ENCODE measurements at regions of chr12 and their contacts with region 1.

Region 1: DNA sequence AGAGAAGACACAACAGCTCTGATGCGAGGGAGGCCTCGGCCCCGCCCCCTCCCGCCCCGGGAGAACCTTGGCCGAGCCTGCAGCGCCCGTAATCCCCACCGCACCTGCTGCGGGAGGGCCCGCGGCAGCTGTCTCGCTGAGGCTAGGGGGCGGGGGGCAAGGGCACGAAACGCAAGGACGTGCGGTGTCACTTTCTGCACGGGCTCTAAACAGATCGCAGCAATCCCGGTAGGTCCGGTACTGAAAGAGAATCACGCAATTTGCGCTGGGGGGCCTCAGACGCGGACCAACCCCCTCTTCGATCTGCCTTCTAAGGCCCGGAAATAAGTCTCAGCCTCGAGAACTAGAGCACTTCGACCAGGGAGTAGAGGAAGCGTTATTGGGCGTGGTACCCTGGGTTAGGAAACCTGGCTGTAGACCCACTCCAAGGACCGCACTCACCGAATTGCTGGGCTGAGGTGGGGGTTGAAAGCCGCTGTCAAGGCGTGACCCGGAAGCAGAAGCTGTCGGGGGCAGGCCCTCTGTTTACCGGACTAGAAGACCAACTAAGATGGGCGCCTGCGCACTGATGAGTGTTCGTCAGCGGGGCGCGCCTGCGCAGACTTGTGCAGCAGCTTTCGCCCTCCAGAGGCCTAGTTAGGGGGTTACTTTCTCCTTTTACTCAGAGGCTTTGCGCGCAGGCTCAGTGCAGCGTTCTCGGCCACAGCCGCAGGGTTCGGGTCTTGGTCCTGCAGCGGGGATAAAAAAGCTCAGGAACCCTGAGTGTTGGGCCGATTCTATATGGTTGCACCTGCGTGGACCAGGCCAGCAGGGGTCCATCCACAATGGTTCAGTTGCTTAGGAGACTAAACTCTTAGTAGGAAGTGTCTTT is at the start of gene ASB8:
- DNase-seq: peak; percentile 94
- H3K4me3 ChIP-seq: peak within 1 kb of the TSS; percentile 63 to 92 (median 83)
- H3K27ac ChIP-seq: peak within 1 kb of the TSS; percentile 41
- H3K4me1 ChIP-seq: peaks cover 6% of the 10 kb centered on the region
- H3K27me3 ChIP-seq: no peaks in the 10 kb centered on the region
- CTCF ChIP-seq: peak; percentile 34 to 51
- total RNA-seq, gene ASB8: 20.4 to 20.7 TPM

Region 2: DNA sequence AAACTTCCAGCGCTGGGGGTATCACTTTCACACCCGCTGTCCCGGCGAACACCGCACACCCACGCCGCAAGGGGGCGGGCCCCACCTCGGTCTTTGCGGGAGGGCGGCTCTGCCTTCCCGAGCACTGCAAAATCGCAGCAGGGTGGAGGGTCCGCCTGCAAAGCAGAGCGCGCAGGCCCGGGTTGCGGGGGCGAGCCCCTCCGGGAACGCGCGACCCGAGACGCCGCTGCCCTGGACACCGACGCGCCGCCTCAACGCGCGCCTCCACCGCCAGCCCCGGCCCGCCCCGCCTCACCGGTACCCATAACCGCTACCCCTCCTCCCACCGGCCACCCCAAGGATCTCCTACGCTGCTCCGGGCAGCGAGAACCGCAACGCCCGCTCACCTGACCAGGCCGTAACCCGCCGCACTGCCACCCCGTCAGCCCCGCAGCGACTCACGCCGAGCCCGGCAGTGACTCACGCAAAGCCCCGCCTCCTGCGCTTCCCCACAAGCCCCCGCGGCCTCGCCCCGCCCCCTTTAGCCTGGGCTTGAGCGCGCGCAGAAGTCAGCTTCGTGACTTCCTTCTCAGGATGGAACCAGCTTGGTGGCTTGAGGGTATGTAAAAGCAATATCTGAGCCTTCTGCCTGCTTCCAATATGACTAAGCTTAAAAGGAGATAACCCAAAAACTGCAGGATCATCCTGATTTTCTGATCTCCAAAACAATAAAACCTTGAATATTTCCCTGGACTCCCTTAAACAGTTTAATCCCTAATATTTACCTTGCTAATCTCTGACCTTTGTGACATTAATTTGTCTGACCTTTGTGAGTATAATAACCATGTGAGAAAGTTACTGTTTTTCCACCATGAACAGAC is 451.5 kb before region 1 on chr12 and contains the start of gene RPAP3:
- CTCF ChIA-PET with region 1: no interaction called
- dilution Hi-C with region 1: no loop called
- in situ Hi-C with region 1: loop called in 1 of 2 experiments (anchors 25 kb)
- intact Hi-C with region 1: no loop called
- DNase-seq: peak; percentile 90
- H3K4me3 ChIP-seq: peak within 1 kb of the TSS; percentile 53 to 92 (median 67)
- H3K27ac ChIP-seq: peak within 1 kb of the TSS; percentile 46
- H3K4me1 ChIP-seq: peaks cover 9% of the 10 kb centered on the region
- H3K27me3 ChIP-seq: no peaks in the 10 kb centered on the region
- CTCF ChIP-seq: peak; percentile 24 to 67
- total RNA-seq, gene RPAP3: 14.8 to 32.7 TPM

Region 3: GRCh38 chr12:47870175-47870781 is 287.0 kb before region 1 on chr12:
- CTCF ChIA-PET with region 1: no interaction called
- dilution Hi-C with region 1: no loop called
- in situ Hi-C with region 1: loop called in 1 of 2 experiments (anchors 25 kb)
- intact Hi-C with region 1: no loop called
- DNase-seq: no peak
- H3K4me3 ChIP-seq: no peak overlapping the region
- H3K27ac ChIP-seq: no peak overlapping the region
- H3K4me1 ChIP-seq: peaks cover 10% of the 10 kb centered on the region
- H3K27me3 ChIP-seq: no peaks in the 10 kb centered on the region
- CTCF ChIP-seq: peak; percentile 19 to 46

Region 4: DNA sequence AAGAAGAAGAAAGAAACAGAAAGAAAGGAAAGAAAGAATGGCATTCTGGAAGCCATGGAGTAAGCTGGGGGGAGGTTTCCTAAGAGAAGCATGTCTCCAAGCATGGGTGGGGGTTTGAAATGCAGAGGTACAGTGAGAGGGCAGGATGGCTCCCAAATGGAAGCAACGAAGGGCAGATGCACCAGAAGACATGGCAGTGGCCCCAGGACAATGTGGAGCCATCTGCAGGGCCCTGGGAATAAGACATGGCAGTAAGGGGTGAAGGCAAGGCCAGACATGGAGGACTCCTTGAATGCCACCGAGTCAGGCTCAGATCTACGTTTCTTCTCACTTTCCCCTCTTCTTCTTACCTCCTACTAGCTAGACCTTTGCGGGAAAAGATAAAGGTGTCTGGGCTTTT is 148.3 kb before region 1 on chr12:
- CTCF ChIA-PET with region 1: interaction called, 15 read pairs
- dilution Hi-C with region 1: no loop called
- in situ Hi-C with region 1: no loop called
- intact Hi-C with region 1: no loop called
- DNase-seq: no peak
- H3K4me3 ChIP-seq: no peak overlapping the region
- H3K27ac ChIP-seq: no peak overlapping the region
- H3K4me1 ChIP-seq: peaks cover 5% of the 10 kb centered on the region
- H3K27me3 ChIP-seq: peaks cover 7% of the 10 kb centered on the region
- CTCF ChIP-seq: no peak

Region 5: DNA sequence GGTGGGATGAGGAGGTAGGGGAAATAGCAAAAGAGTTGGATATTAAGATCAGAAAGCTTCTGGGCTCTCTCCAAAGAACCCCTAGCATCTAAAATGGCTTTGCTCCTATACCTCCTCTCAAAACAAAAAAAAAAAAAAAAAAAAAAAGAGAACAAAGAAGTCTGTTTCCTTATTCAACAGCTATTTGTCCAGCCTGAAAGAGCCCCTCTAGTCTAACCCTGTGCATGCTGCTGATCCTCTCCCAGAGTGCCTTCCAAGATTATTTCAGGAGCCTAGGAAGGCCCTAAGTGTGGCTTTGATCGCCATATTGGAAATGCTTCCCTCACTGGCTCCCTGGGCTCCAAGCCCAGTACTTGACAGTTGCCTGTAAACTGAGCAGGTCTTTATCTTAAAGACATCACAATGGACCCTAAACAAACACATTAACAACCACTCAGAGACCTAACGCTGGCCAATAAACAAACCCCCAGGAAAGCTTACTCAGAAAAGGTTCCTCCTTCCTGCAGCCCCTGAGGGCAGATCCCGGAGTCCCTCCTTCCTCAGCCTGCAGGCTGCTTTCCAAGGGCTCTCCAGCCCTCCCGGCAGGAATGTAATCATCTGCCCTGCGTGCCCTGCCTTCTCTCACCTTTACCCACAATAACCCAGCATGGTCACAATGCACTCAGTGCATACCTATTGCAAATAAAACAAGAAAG is 135.6 kb before region 1 on chr12:
- CTCF ChIA-PET with region 1: no interaction called
- dilution Hi-C with region 1: no loop called
- in situ Hi-C with region 1: no loop called
- intact Hi-C with region 1: no loop called
- DNase-seq: no peak
- H3K4me3 ChIP-seq: no peak overlapping the region
- H3K27ac ChIP-seq: no peak overlapping the region
- H3K4me1 ChIP-seq: peaks cover 5% of the 10 kb centered on the region
- H3K27me3 ChIP-seq: no peaks in the 10 kb centered on the region
- CTCF ChIP-seq: no peak

Region 6: GRCh38 chr12:48105862-48106680 is 51.2 kb before region 1 on chr12 and contains the start of gene SENP1:
- CTCF ChIA-PET with region 1: no interaction called
- dilution Hi-C with region 1: no loop called
- in situ Hi-C with region 1: no loop called
- intact Hi-C with region 1: loop called (anchors 2 kb)
- DNase-seq: peak; percentile 85
- H3K4me3 ChIP-seq: peak within 1 kb of the TSS; percentile 66 to 91 (median 86)
- H3K27ac ChIP-seq: peak within 1 kb of the TSS; percentile 94
- H3K4me1 ChIP-seq: peaks cover 25% of the 10 kb centered on the region
- H3K27me3 ChIP-seq: no peaks in the 10 kb centered on the region
- CTCF ChIP-seq: peak in 1 of 2 donors; percentile 28
- total RNA-seq, gene SENP1: 20.3 to 24.7 TPM

Region 7: DNA sequence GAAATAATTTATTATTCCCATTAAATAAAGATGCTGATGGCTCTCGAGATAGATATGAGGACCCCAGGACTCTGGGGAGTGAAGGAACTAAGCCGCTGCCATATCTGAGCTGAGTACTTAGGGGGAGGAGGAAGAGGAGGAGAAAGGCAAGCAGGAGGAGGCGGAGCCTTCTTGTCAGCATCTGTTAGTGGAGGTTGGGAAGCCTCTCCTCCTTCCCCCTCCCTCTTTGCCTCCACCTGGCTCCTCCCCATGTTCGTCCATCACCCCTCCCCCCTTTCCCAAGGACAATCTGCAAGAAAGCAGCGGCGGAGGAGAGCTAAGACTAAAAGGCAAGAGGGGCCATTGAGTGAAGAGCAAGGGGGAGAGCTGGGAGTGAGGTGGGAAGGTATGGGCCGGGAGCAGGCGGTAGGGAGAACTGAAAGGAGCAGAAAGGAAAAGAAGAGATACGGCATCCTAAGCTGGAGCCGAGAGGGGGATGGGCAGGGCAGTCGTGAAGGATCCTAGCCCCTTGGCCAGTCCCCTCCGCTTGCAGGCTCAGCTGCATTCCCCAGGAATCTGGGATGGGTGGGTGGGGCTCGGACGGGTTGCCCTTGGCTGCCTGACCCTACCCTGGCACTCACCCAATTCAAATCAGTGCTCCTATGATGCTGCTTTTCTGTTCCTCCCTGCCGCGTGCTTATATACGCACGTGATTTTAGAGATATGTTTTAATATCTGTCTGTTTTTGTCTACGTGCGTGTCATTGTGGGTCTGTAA is 38.0 kb before region 1 on chr12 and contains the start of gene PFKM:
- CTCF ChIA-PET with region 1: no interaction called
- dilution Hi-C with region 1: no loop called
- in situ Hi-C with region 1: no loop called
- intact Hi-C with region 1: loop called (anchors 5 kb)
- DNase-seq: peak; percentile 84
- H3K4me3 ChIP-seq: peak within 1 kb of the TSS; percentile 73 to 93 (median 90)
- H3K27ac ChIP-seq: peak within 1 kb of the TSS; percentile 30
- H3K4me1 ChIP-seq: peaks cover 11% of the 10 kb centered on the region
- H3K27me3 ChIP-seq: no peaks in the 10 kb centered on the region
- CTCF ChIP-seq: no peak
- total RNA-seq, gene PFKM: 63.2 to 82.0 TPM

Region 8: GRCh38 chr12:48131517-48131916 is 25.7 kb before region 1 on chr12:
- CTCF ChIA-PET with region 1: no interaction called
- dilution Hi-C with region 1: no loop called
- in situ Hi-C with region 1: no loop called
- intact Hi-C with region 1: no loop called
- DNase-seq: no peak
- H3K4me3 ChIP-seq: no peak overlapping the region
- H3K27ac ChIP-seq: no peak overlapping the region
- H3K4me1 ChIP-seq: no peaks in the 10 kb centered on the region
- H3K27me3 ChIP-seq: no peaks in the 10 kb centered on the region
- CTCF ChIP-seq: no peak

Region 9: DNA sequence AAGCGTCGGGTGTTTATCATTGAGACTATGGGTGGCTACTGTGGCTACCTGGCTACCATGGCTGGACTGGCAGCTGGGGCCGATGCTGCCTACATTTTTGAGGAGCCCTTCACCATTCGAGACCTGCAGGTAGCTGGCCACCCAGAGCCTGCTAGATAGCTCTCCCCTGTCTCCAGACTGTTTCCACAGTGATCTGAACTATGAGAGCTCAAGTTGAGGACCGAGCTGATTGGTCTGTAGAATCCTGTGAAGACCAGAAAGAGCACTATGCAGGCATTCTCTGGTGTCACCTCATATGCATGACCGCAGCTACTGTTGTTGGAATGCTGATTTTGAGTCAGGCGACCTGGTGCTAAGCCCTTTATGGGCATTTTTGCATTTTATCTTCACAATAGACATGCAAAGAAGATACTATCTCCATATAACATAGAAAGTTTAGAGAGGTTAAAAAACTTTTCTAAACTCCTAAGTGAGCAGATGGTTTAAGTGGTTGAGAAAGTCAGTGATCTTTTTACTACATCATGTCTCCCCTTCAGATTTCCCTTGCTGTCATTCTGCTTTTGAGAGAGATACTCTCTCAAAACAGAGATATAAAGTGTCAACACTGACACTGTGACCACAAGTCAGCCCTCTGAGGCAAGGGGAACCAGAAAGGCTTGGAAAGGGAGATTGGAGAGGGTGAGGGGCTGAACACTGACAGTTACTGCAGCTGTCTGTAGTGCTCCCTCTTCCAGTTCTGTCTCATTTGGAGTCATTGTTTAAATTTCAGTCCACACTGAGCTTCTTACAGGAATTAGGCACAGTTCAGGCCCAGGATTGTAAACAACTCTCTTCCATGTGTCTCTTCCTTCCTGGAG is 14.2 kb before region 1 on chr12:
- CTCF ChIA-PET with region 1: no interaction called
- dilution Hi-C with region 1: no loop called
- in situ Hi-C with region 1: no loop called
- intact Hi-C with region 1: no loop called
- DNase-seq: no peak
- H3K4me3 ChIP-seq: no peak overlapping the region
- H3K27ac ChIP-seq: no peak overlapping the region
- H3K4me1 ChIP-seq: no peaks in the 10 kb centered on the region
- H3K27me3 ChIP-seq: no peaks in the 10 kb centered on the region
- CTCF ChIP-seq: no peak

Region 10: GRCh38 chr12:48286665-48287064 is 129.4 kb after region 1 on chr12:
- CTCF ChIA-PET with region 1: no interaction called
- dilution Hi-C with region 1: no loop called
- in situ Hi-C with region 1: no loop called
- intact Hi-C with region 1: no loop called
- DNase-seq: no peak
- H3K4me3 ChIP-seq: no peak overlapping the region
- H3K27ac ChIP-seq: no peak overlapping the region
- H3K4me1 ChIP-seq: peaks cover 4% of the 10 kb centered on the region
- H3K27me3 ChIP-seq: peaks cover 2% of the 10 kb centered on the region
- CTCF ChIP-seq: peak; percentile 8 to 18

Region 11: GRCh38 chr12:48618541-48618940 is 461.3 kb after region 1 on chr12:
- CTCF ChIA-PET with region 1: no interaction called
- dilution Hi-C with region 1: no loop called
- in situ Hi-C with region 1: no loop called
- intact Hi-C with region 1: loop called (anchors 2 kb)
- DNase-seq: peak; percentile 60
- H3K4me3 ChIP-seq: no peak overlapping the region
- H3K27ac ChIP-seq: no peak overlapping the region
- H3K4me1 ChIP-seq: no peaks in the 10 kb centered on the region
- H3K27me3 ChIP-seq: no peaks in the 10 kb centered on the region
- CTCF ChIP-seq: peak; percentile 99 to 100